GM23248 (cell line): ENCODE measurements at regions of chr10 and their contacts with region 1.

Region 1: DNA sequence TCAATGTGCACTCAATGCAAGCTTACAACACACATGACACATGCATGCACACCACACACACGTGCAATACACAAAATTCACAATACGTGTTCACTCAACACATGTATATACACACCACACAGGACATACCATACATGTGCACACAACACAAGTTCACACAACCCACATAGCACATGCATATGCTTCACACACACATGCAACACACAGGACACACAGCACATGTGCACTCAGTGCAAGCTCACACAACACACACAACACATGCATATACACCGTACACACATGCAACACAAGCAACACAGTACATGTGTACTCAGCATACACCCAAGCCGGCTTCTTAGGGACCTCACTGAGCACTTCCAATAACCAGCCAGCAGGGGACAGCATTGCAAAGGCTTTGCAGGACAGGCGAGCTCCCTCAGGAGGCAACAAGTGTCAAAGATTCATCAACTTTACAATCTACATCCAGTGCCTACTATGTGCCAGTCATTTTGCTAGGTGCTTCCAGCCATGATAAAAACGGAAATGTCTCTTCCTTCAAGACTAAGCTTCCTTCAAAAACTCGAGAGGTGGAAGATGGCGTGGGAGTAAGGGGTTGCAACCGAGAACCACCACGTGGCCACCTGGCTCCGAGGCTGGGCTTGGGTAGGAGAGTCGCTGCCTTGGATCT is 61.1 kb downstream of the JCAD start:
- DNase-seq: peak; percentile 85
- H3K4me3 ChIP-seq: no peak overlapping the region
- H3K27ac ChIP-seq: no peak overlapping the region
- H3K4me1 ChIP-seq: peaks cover 19% of the 10 kb centered on the region
- H3K27me3 ChIP-seq: peaks cover 4% of the 10 kb centered on the region; the same call in 1 of the 2 replicates

Region 2: DNA sequence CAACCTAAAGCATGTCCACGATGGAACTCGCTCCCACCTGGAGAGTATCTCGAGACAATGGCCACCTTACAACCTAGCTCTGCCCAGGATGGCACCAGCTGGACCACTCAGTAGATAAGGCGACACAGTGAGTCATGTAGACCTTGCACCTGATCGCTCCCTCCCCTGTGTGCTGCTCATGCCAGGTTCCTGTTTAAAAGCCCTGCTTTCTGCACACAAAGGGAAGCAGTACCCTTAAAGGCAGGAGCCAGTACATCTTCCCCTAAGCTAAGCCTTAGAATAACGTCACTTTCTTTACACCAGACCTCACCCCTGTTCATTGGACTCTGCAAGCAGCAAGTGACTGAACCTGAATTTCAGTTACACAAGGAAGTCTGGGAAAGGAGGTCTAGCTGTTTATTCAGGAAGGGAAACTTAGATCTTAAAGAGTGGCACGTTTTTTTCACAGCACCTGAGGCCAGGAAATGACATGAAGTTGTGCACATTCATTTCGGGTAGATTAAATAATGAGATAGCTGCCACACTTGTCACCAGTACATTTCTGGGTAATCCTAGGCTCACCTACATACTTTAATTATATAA is 232.9 kb after region 1 on chr10:
- in situ Hi-C with region 1: loop called (anchors 10 kb)
- DNase-seq: no peak
- H3K4me3 ChIP-seq: no peak overlapping the region
- H3K27ac ChIP-seq: no peak overlapping the region
- H3K4me1 ChIP-seq: peaks cover 19% of the 10 kb centered on the region
- H3K27me3 ChIP-seq: no peaks in the 10 kb centered on the region